Keratinocyte (primary cell): ENCODE measurements at regions of chr4 and their contacts with region 1.

Region 1: GRCh38 chr4:21921526-21922180 is 26.9 kb downstream of the KCNIP4 start:
- DNase-seq: no peak
- H3K4me3 ChIP-seq: no peak overlapping the region
- H3K27ac ChIP-seq: no peak overlapping the region
- H3K4me1 ChIP-seq: no peaks in the 10 kb centered on the region
- H3K27me3 ChIP-seq: no peaks in the 10 kb centered on the region
- CTCF ChIP-seq: no peak

Region 2: DNA sequence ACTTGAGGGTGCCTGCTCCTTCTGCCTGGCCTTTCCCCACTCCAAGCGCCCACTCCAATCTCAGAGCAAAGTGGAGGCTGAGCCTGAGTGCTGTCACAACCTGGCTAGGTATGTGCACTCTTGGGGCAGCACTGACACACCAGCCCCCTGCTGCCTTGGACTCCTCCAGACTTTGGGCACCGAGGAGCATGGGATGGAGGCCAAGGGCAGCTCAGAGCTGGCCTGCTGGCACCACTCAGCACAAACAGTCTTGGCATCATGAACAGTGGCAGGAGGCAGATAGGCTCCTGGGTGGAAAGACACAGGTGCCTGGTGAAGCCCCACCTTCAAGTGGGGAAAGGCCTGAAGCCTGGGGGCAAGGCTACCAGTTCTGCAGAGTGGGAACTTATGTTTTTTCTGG is 64.9 kb before region 1 on chr4:
- dilution Hi-C with region 1: no loop called
- DNase-seq: no peak
- H3K4me3 ChIP-seq: no peak overlapping the region
- H3K27ac ChIP-seq: no peak overlapping the region
- H3K4me1 ChIP-seq: no peaks in the 10 kb centered on the region
- H3K27me3 ChIP-seq: no peaks in the 10 kb centered on the region
- CTCF ChIP-seq: no peak

Region 3: DNA sequence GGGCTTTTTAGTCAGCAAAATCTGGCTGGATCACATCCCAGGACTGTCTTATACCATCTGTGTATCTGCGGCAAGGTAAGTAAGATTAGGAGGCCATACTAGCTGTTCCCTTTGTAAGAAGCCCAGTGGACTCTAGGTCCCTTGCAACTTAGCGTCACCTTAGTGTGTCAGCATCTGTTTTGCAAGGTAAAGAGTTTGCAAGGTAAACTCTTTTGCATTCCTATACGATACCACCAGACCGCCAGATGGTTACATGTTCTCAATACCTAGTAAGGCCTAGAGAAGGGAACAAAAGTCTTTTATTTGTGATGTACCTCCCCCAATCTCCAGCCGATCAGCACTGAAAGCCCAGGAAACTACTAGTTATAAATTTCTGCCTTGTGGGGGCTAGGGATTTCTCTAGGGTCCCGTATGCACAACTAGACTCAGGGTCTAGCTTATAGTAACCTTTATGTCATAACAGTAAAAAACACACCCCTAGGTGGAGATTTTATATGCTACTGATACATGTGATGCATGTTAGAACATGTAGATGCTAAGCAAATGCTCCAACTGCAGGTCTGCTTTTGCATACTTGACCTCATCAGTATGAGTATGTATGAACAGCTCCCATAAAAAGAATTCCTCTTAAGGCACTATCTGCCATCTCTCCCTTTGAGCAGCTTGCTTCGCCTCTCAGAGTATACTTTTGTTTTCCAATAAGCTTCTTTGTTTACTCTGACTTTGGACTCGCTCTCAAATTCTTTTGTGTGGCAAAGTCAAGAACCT is 51.5 kb before region 1 on chr4:
- dilution Hi-C with region 1: no loop called
- DNase-seq: peak; percentile 42
- H3K4me3 ChIP-seq: no peak overlapping the region
- H3K27ac ChIP-seq: no peak overlapping the region
- H3K4me1 ChIP-seq: peaks cover 4% of the 10 kb centered on the region
- H3K27me3 ChIP-seq: no peaks in the 10 kb centered on the region
- CTCF ChIP-seq: no peak

Region 4: GRCh38 chr4:21964762-21965319 is 43.2 kb after region 1 on chr4:
- dilution Hi-C with region 1: loop called (anchors 5 kb)
- DNase-seq: no peak
- H3K4me3 ChIP-seq: no peak overlapping the region
- H3K27ac ChIP-seq: no peak overlapping the region
- H3K4me1 ChIP-seq: no peaks in the 10 kb centered on the region
- H3K27me3 ChIP-seq: peaks cover 5% of the 10 kb centered on the region
- CTCF ChIP-seq: no peak

Region 5: GRCh38 chr4:22233230-22233629 is 311.6 kb after region 1 on chr4:
- dilution Hi-C with region 1: no loop called
- DNase-seq: no peak
- H3K4me3 ChIP-seq: no peak overlapping the region
- H3K27ac ChIP-seq: no peak overlapping the region
- H3K4me1 ChIP-seq: no peaks in the 10 kb centered on the region
- H3K27me3 ChIP-seq: no peaks in the 10 kb centered on the region
- CTCF ChIP-seq: no peak

Region 6: GRCh38 chr4:22881411-22881810 is 959.8 kb after region 1 on chr4:
- dilution Hi-C with region 1: no loop called
- DNase-seq: no peak
- H3K4me3 ChIP-seq: no peak overlapping the region
- H3K27ac ChIP-seq: no peak overlapping the region
- H3K4me1 ChIP-seq: no peaks in the 10 kb centered on the region
- H3K27me3 ChIP-seq: no peaks in the 10 kb centered on the region
- CTCF ChIP-seq: no peak